ENCODE measurements at regions of chr5 and their contacts with region 1.

Region 1: DNA sequence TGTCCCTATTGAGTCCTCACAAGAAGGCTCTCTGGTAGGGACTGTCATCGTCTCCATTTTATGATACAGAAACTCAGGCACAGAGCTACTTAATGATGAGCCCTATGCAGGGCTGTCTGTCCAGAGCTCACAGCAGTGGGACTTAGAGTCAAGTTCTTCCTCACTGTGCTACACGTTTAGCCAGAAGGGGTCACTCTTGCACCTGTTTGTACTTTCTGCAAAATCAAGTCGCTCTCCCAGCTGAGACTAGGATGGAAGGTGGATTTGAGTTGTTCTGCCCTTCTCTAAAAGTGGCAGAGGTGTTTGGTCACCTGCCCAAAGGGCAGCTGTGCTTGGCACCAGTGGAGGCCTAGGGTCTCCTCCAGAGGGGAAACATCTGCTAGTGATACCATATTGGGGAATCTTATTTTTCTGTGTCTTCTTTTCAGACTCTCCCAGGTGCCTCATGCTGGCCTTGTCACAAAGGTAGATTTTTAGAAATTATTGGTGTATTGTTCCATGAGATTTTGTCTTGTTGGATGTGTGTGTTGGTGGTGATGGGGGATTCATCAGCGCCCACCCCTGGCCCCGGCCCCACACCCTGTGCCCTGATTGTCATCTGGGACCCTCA is 104.2 kb downstream of the PPARGC1B start:
- DNase-seq: peak; percentile 64
- H3K4me3 Mint-ChIP-seq: no peak overlapping the region
- H3K27ac Mint-ChIP-seq: no peak overlapping the region
- H3K4me1 Mint-ChIP-seq: peaks cover 7% of the 10 kb centered on the region
- H3K27me3 Mint-ChIP-seq: no peaks in the 10 kb centered on the region

Region 2: DNA sequence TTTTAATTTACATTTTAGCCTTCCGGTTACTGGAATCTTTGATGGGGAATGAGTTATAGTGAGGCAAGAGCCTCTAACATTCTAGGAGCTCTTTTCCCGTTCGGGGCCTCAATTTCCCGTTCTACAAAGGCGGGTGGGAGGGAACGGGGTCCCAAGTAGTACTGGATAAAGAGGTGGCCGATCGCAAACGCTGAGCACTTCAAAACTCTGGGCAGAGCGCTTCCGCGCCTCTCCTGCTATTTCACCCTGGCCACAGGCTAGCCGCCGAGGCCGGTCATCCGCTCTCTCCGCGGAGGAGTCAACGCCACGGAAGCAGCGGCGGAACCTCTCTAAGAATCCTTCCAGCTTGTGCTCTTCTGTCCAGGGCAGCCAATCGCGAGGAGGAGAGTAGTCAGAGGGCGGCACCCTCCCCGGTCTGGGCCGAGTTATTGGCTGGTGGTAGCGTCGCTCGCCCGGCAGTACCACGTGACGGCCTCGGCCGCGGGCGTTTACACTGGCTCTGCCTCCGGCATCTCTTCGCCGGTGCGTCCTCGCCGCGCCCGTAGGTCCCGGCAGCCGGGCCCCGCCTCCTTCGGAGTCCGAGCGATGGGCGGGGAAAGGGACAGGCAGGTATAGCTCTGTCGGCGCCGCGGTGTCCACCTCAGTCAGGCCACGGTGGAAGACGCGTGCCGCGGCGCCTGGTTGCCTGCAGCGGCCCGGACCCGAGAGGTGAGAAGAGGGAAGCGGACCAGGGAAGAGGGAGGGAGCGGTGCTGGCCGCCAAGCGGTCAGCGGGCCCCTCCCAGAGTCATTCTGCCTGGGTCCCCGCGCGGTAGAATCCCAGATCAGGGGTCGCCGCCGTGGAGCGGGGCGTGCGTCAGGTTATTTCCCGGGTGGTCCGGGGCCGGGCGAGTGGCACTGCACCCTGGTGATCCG is 126.2 kb after region 1 on chr5 and contains the start of gene SLC26A2:
- CTCF ChIA-PET with region 1: interaction called, 57 read pairs
- POLR2A ChIA-PET with region 1: interaction called, 5 read pairs
- DNase-seq: peak; percentile 97
- H3K4me3 Mint-ChIP-seq: peak within 1 kb of the TSS; percentile 74
- H3K27ac Mint-ChIP-seq: peak within 1 kb of the TSS; percentile 86
- H3K4me1 Mint-ChIP-seq: peaks cover 36% of the 10 kb centered on the region
- H3K27me3 Mint-ChIP-seq: no peaks in the 10 kb centered on the region
- total RNA-seq, gene SLC26A2: 8.3 to 8.4 TPM